ENCODE measurements at regions of chr19 and their contacts with region 1.

Region 1: GRCh38 chr19:33406521-33407139 is 33.1 kb downstream of the CEBPG start:
- DNase-seq: peak; percentile 82
- ATAC-seq: peak; percentile 80
- H3K4me3 ChIP-seq: no peak overlapping the region
- H3K27ac ChIP-seq: no peak overlapping the region
- H3K4me1 ChIP-seq: peaks cover 21% of the 10 kb centered on the region
- H3K27me3 ChIP-seq: no peaks in the 10 kb centered on the region
- CTCF ChIP-seq: peak; percentile 96

Region 2: GRCh38 chr19:33241530-33242101 is 165.0 kb before region 1 on chr19:
- intact Hi-C with region 1: loop called (anchors 5 kb)
- DNase-seq: peak; percentile 75
- ATAC-seq: peak; percentile 76
- H3K4me3 ChIP-seq: no peak overlapping the region
- H3K27ac ChIP-seq: no peak overlapping the region
- H3K4me1 ChIP-seq: peaks cover 6% of the 10 kb centered on the region
- H3K27me3 ChIP-seq: no peaks in the 10 kb centered on the region
- CTCF ChIP-seq: peak; percentile 77